MCF 10A (cell line): ENCODE measurements at regions of chr1 and their contacts with region 1.

Region 1: DNA sequence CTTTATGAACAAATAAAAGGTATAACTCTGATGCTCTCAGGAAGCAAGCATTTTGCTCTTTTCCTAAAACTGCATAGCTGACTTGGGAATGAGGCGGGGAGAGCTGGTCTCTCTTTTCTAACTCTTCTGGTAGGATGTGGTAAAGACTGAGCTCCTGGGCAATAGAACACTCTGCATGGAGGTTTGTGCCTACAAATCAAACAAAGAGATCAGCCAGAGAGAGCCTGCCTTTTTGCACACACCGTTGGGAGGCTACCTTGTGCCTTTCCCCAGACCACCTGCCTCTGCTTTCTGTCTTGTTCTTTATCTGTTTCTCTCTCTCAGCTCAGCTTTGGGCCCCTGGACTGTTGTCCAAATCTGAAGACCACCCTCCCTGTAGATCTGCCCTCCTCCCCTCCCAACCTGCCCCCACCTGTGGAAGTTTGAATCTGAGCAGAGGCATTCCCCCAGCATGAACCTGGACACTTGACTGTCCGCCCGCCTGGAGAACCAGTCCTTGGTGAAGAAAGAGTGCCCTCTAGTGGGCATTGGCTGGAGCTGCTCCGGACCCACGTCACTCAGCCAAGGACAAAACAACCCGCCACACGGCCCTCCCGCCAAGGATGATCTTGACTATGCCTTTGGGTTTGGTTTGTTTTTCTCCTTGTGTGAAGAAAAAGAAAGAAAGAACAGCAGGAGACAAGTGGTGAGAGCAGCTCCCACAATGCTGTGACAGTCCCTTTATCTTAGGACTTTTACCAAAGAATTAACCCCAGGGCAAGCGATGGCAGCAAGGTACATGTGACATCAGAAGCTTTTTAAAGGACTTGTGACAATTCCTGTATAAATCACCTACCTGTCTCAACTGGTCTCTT is 228.2 kb downstream of the PBX1 start:
- DNase-seq: peak; percentile 91
- H3K4me3 Mint-ChIP-seq: no peak overlapping the region
- H3K27ac Mint-ChIP-seq: no peak overlapping the region
- H3K4me1 Mint-ChIP-seq: peaks cover 38% of the 10 kb centered on the region
- H3K27me3 Mint-ChIP-seq: no peaks in the 10 kb centered on the region
- CTCF ChIP-seq: peak; percentile 98

Region 2: DNA sequence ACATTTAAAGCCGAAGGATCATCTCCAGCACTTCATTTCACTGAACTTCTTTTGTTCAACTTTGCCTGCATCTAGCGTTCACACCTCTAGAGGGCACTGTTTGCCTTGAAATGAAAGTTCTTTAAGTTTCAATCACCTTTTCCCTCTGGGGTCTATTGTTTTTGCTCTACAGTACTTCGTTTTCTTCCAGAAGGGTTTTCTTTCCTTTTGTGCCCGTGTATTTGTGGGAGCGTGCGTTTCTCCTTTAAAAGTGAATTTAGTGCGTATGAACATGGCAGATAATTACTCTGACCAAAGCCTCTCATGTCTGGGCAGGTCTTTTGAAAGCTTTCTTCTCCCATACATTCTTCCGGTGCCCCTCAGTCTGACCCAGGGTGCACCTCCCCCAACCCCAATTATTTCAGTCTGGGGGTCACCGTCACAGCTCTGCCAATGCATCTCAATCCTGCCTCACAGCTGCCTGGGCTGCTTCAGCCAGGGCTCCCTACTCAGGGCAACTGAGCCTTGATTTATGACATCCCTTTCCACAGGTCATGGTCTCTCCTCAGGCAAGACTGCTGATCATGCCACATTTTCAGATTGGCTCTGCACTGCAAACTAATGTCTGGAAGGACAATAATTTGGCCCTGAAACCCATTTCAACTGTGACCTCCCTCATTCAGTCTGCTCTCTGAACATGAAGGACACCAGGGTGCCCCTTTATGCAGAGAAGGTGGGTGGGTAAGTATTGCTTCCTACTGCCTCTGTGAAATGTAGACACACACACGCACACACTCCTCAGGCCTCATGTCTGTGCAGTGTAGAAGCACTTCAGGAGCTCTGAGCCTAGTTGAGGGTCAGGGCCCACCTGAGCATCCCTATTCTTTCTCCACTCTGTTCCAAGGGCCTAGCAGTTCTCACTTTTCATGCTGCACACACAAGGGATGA is 1376.9 kb before region 1 on chr1:
- CTCF ChIA-PET with region 1: interaction called, 5 read pairs
- POLR2A ChIA-PET with region 1: no interaction called
- intact Hi-C with region 1: loop called (anchors 2 kb)
- DNase-seq: peak; percentile 75
- H3K4me3 Mint-ChIP-seq: peak overlapping the region; percentile 26
- H3K27ac Mint-ChIP-seq: no peak overlapping the region
- H3K4me1 Mint-ChIP-seq: peaks cover 8% of the 10 kb centered on the region
- H3K27me3 Mint-ChIP-seq: peaks cover 8% of the 10 kb centered on the region
- CTCF ChIP-seq: peak; percentile 91

Region 3: GRCh38 chr1:164092603-164093353 is 694.4 kb before region 1 on chr1:
- CTCF ChIA-PET with region 1: no interaction called
- POLR2A ChIA-PET with region 1: no interaction called
- intact Hi-C with region 1: loop called (anchors 10 kb)
- DNase-seq: no peak
- H3K4me3 Mint-ChIP-seq: no peak overlapping the region
- H3K27ac Mint-ChIP-seq: no peak overlapping the region
- H3K4me1 Mint-ChIP-seq: no peaks in the 10 kb centered on the region
- H3K27me3 Mint-ChIP-seq: no peaks in the 10 kb centered on the region
- CTCF ChIP-seq: no peak

Region 4: DNA sequence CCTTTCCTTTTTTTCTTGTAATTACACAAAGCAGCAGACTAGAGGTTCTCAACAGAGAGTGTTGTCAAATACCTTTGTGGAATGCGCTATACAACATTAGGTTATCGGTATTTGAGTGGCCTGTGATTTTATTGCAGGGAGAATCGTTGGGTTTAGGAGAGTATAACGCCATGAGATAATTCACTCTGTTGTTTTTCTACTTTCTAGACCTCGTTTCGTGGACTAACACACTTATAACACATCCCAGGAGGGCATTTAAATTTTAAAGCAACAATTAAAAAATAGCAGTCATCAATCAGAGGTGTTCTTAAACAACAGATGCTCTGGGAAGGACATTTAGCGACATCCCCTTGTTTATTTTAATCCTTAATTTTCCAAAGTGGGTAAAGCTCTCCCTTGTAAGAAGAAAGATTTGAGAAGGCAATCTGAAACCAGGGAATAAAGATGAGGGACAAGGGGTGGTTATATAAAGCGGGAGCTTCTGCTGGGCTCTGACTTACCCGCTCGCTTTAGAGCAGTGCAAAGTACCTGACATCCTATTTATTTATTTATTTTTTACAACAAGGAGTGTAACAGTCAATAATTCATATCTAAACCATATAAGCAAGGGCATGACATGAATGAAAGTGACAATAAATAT is 223.4 kb before region 1 on chr1:
- CTCF ChIA-PET with region 1: interaction called, 19 read pairs
- POLR2A ChIA-PET with region 1: interaction called, 12 read pairs
- intact Hi-C with region 1: loop called (anchors 2 kb)
- DNase-seq: peak; percentile 30
- H3K4me3 Mint-ChIP-seq: peak overlapping the region; percentile 89
- H3K27ac Mint-ChIP-seq: peak overlapping the region; percentile 99
- H3K4me1 Mint-ChIP-seq: peaks cover 33% of the 10 kb centered on the region
- H3K27me3 Mint-ChIP-seq: no peaks in the 10 kb centered on the region
- CTCF ChIP-seq: no peak

Region 5: GRCh38 chr1:164630626-164631396 is 156.4 kb before region 1 on chr1:
- CTCF ChIA-PET with region 1: interaction called, 15 read pairs
- POLR2A ChIA-PET with region 1: interaction called, 4 read pairs
- intact Hi-C with region 1: no loop called
- DNase-seq: peak; percentile 90
- H3K4me3 Mint-ChIP-seq: no peak overlapping the region
- H3K27ac Mint-ChIP-seq: no peak overlapping the region
- H3K4me1 Mint-ChIP-seq: peaks cover 13% of the 10 kb centered on the region
- H3K27me3 Mint-ChIP-seq: no peaks in the 10 kb centered on the region
- CTCF ChIP-seq: no peak

Region 6: DNA sequence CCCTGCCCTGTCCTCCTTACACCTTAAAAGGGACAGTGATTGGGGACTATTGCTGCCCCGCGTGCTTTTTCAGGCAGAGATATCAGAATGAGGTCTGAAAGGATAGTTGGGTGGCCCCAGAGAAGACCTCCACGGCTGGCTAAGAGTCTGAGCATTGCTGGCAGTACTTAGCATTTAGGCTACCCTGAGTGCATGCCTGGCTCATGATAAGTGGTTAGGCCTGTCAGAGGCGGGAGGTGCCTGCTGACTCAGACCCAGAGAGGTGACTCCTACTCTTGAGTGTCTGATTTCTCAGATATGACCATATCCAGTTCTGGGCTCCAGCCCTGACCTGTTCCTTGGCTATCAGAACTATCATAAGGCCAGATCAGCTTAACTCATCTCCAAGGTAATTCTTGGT is 14.6 kb before region 1 on chr1:
- CTCF ChIA-PET with region 1: interaction called, 83 read pairs
- POLR2A ChIA-PET with region 1: interaction called, 21 read pairs
- intact Hi-C with region 1: no loop called
- DNase-seq: peak; percentile 95
- H3K4me3 Mint-ChIP-seq: no peak overlapping the region
- H3K27ac Mint-ChIP-seq: peak overlapping the region; percentile 85
- H3K4me1 Mint-ChIP-seq: peaks cover 54% of the 10 kb centered on the region
- H3K27me3 Mint-ChIP-seq: no peaks in the 10 kb centered on the region
- CTCF ChIP-seq: no peak

Region 7: GRCh38 chr1:164843743-164844500 is 56.7 kb after region 1 on chr1:
- CTCF ChIA-PET with region 1: no interaction called
- POLR2A ChIA-PET with region 1: no interaction called
- intact Hi-C with region 1: no loop called
- DNase-seq: no peak
- H3K4me3 Mint-ChIP-seq: no peak overlapping the region
- H3K27ac Mint-ChIP-seq: no peak overlapping the region
- H3K4me1 Mint-ChIP-seq: no peaks in the 10 kb centered on the region
- H3K27me3 Mint-ChIP-seq: no peaks in the 10 kb centered on the region
- CTCF ChIP-seq: no peak

Region 8: GRCh38 chr1:164891612-164892011 is 104.4 kb after region 1 on chr1:
- CTCF ChIA-PET with region 1: no interaction called
- POLR2A ChIA-PET with region 1: no interaction called
- intact Hi-C with region 1: no loop called
- DNase-seq: peak; percentile 14
- H3K4me3 Mint-ChIP-seq: no peak overlapping the region
- H3K27ac Mint-ChIP-seq: no peak overlapping the region
- H3K4me1 Mint-ChIP-seq: no peaks in the 10 kb centered on the region
- H3K27me3 Mint-ChIP-seq: no peaks in the 10 kb centered on the region
- CTCF ChIP-seq: peak; percentile 10